HepG2 (cell line): ENCODE measurements at regions of chr5 and their contacts with region 1.

Region 1: DNA sequence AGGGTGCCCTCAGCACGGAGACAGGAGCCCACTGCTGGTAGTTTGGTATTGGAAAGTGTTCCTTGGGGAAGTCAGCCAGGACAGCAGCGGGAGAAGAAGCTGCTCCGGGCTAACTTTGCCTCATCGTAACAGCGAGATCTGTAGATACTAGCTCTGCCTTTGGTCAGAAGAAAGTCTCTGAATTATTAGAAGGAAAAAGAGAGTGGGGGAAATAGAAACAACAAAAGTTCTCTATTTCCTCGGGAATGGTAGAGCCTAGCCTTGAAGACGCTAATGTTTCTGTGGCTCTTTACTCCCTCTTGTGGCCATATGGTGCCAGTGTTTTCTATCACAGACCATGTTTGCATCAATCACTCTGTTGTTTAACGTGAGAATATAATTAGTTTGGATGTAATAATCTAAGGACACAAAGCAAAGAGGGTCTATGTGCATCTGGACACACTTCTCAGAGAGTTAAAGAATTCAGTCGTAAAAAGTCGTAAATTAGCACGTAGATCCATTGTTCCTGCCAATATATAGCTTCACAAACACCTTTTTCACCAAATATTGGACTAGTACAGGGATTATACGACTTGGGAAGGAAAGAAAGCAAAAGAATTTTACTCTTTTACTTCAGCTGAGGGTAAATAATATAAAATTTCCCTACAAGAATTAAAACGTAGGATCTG is 40.2 kb upstream of the HSD17B4 start:
- DNase-seq: peak; percentile 57
- ATAC-seq: peak; percentile 93
- H3K4me3 ChIP-seq: peak overlapping the region; percentile 44 to 61 (median 53)
- H3K27ac ChIP-seq: no peak overlapping the region
- H3K4me1 ChIP-seq: peaks cover 15% of the 10 kb centered on the region
- H3K27me3 ChIP-seq: 0 out of 5 replicates have a peak, but pooled peaks cover 0 to 1% of the 10 kb centered on the region in 2 experiments
- CTCF ChIP-seq: peak; percentile 87
- EP300 ChIP-seq: no peak
- POLR2A ChIP-seq: no peak
- RAD21 ChIP-seq: peak; percentile 79

Region 2: GRCh38 chr5:119022017-119022745 is 389.9 kb before region 1 on chr5:
- CTCF ChIA-PET with region 1: interaction called, 14 read pairs
- POLR2A ChIA-PET with region 1: no interaction called
- in situ Hi-C with region 1: loop called (anchors 10 kb)
- intact Hi-C with region 1: loop called (anchors 1 kb)
- DNase-seq: no peak
- ATAC-seq: peak; percentile 76
- H3K4me3 ChIP-seq: no peak overlapping the region
- H3K27ac ChIP-seq: no peak overlapping the region
- H3K4me1 ChIP-seq: no peaks in the 10 kb centered on the region
- H3K27me3 ChIP-seq: no peaks in the 10 kb centered on the region
- CTCF ChIP-seq: peak; percentile 56
- EP300 ChIP-seq: no peak
- POLR2A ChIP-seq: no peak
- RAD21 ChIP-seq: peak; percentile 27; the same call in 1 of the 2 replicates

Region 3: GRCh38 chr5:119070828-119071572 is 341.1 kb before region 1 on chr5 and contains the start of gene DMXL1:
- CTCF ChIA-PET with region 1: no interaction called
- POLR2A ChIA-PET with region 1: no interaction called
- in situ Hi-C with region 1: no loop called
- intact Hi-C with region 1: loop called (anchors 5 kb)
- DNase-seq: peak; percentile 98
- ATAC-seq: peak; percentile 91
- H3K4me3 ChIP-seq: peak within 1 kb of the TSS; percentile 91 to 93 (median 92)
- H3K27ac ChIP-seq: peak within 1 kb of the TSS; percentile 93
- H3K4me1 ChIP-seq: peaks cover 37% of the 10 kb centered on the region
- H3K27me3 ChIP-seq: no peaks in the 10 kb centered on the region; a peak in 1 of 5 replicates
- CTCF ChIP-seq: no peak; the same call in 1 of the 2 replicates
- EP300 ChIP-seq: no peak
- POLR2A ChIP-seq: peak; percentile 82
- RAD21 ChIP-seq: peak; percentile 53; the same call in 1 of the 2 replicates
- total RNA-seq, gene DMXL1: 18.6 and 22.9 TPM in 2 replicates

Region 4: GRCh38 chr5:119267958-119268386 is 144.1 kb before region 1 on chr5:
- CTCF ChIA-PET with region 1: interaction called, 3 read pairs
- POLR2A ChIA-PET with region 1: no interaction called
- in situ Hi-C with region 1: no loop called
- intact Hi-C with region 1: loop called (anchors 1 kb)
- DNase-seq: peak; percentile 91
- ATAC-seq: peak; percentile 93
- H3K4me3 ChIP-seq: peak overlapping the region; percentile 76 to 96 (median 87)
- H3K27ac ChIP-seq: peak overlapping the region; percentile 78
- H3K4me1 ChIP-seq: peaks cover 34% of the 10 kb centered on the region
- H3K27me3 ChIP-seq: no peaks in the 10 kb centered on the region; a peak in 1 of 5 replicates
- CTCF ChIP-seq: no peak
- EP300 ChIP-seq: no peak
- POLR2A ChIP-seq: no peak
- RAD21 ChIP-seq: no peak

Region 5: DNA sequence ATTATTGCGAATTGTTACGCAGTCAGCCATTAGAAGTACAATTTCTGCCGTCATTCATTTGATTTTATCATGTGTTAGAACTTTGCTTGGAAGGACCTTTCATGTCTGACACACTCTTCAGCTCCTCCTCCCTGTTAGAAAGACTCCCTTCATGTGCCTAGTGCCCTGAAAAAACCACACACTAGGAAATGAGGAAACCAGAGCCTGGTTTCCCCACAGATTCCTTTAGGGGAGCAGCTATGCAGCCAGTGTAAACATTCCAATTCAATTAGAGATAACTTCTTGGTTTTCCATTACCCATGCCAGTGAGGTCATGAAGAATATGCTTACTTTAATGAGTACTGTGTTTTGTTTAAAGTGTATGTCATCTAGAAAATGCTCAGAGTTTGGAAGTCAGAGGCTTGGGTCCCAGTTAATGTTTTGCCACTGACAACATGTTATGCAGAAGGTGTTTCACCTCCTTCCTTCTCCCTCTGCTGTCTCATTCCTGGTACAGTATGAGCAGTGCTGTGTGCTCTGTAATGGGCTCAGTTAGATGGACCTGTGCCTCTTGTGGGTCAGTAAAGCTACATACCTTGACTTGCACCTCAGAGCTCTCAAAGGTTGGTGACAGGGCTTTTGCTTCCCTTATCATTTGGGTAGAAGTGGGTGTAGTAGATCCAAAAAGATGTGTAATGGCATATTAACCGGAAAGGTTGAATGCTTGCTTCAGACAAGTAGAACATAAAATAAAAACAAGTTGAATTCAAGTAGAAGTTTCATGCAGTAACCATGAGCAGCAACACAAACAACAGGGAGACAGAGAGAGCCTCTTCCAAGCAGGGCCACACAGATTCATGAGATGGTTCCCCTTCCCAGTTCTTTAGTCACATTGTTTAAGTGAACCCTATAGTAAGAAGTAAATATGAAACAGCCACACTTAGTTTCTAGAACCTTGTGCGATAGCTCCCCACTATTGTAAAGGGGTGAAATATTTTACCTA is 108.9 kb before region 1 on chr5:
- CTCF ChIA-PET with region 1: no interaction called
- POLR2A ChIA-PET with region 1: interaction called, 3 read pairs
- in situ Hi-C with region 1: no loop called
- intact Hi-C with region 1: loop called (anchors 2 kb)
- DNase-seq: peak; percentile 97
- ATAC-seq: peak; percentile 98
- H3K4me3 ChIP-seq: peak overlapping the region in 2 of 3 experiments; percentile 1 to 5; a peak in 3 of 6 replicates
- H3K27ac ChIP-seq: peak overlapping the region; percentile 60
- H3K4me1 ChIP-seq: peaks cover 57% of the 10 kb centered on the region
- H3K27me3 ChIP-seq: no peaks in the 10 kb centered on the region
- CTCF ChIP-seq: peak; percentile 35; the same call in 1 of the 2 replicates
- EP300 ChIP-seq: peak in 1 of 2 experiments; percentile 70; a peak in 2 of 4 replicates
- POLR2A ChIP-seq: peak in 1 of 2 experiments; percentile 67; a peak in 1 of 4 replicates
- RAD21 ChIP-seq: no peak

Region 6: DNA sequence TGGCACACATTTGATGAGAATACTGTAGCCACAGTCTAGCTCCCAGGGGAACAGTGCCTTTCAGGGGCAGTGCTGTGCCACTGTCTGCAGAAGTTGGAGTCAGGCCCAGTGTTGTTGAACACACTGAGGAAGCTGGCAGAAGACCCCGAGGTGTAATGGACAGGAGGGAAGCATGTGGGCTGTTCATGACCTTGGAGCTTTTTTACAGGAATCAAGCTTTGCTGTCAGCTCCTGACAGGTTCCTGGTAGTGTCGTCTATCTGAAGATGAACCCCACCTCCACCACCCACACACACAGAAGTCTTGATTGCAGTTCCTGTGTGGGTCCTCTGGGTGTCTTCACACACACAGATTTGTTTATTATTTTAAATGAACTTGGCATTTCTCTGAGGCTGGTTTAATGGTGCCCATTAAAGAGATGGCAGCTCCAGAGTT is 96.5 kb before region 1 on chr5:
- CTCF ChIA-PET with region 1: no interaction called
- POLR2A ChIA-PET with region 1: no interaction called
- in situ Hi-C with region 1: no loop called
- intact Hi-C with region 1: loop called (anchors 5 kb)
- DNase-seq: peak; percentile 31
- ATAC-seq: peak; percentile 90
- H3K4me3 ChIP-seq: no peak overlapping the region
- H3K27ac ChIP-seq: no peak overlapping the region
- H3K4me1 ChIP-seq: peaks cover 22% of the 10 kb centered on the region
- H3K27me3 ChIP-seq: no peaks in the 10 kb centered on the region
- CTCF ChIP-seq: peak; percentile 28; the same call in 1 of the 2 replicates
- EP300 ChIP-seq: no peak
- POLR2A ChIP-seq: no peak
- RAD21 ChIP-seq: no peak

Region 7: GRCh38 chr5:119435436-119436132 is 23.5 kb after region 1 on chr5:
- CTCF ChIA-PET with region 1: no interaction called
- POLR2A ChIA-PET with region 1: no interaction called
- in situ Hi-C with region 1: no loop called
- intact Hi-C with region 1: no loop called
- DNase-seq: peak; percentile 55
- ATAC-seq: peak; percentile 83
- H3K4me3 ChIP-seq: peak overlapping the region in 2 of 3 experiments; percentile 18 to 34; a peak in 4 of 6 replicates
- H3K27ac ChIP-seq: no peak overlapping the region
- H3K4me1 ChIP-seq: peaks cover 41% of the 10 kb centered on the region
- H3K27me3 ChIP-seq: no peaks in the 10 kb centered on the region; a peak in 1 of 5 replicates
- CTCF ChIP-seq: peak; percentile 82
- EP300 ChIP-seq: no peak
- POLR2A ChIP-seq: no peak
- RAD21 ChIP-seq: no peak; the same call in 1 of the 2 replicates